ENCODE measurements at regions of chr17 and their contacts with region 1.

Region 1: GRCh38 chr17:66165513-66166123 is 26.3 kb downstream of the CEP112 start:
- DNase-seq: no peak
- ATAC-seq: no peak
- H3K4me3 ChIP-seq: no peak overlapping the region
- H3K27ac ChIP-seq: no peak overlapping the region
- H3K4me1 ChIP-seq: no peaks in the 10 kb centered on the region
- H3K27me3 ChIP-seq: no peaks in the 10 kb centered on the region

Region 2: GRCh38 chr17:65231662-65232335 is 933.8 kb before region 1 on chr17:
- intact Hi-C with region 1: loop called in 1 of 4 experiments (anchors 5 kb)
- DNase-seq: peak in 1 of 3 donors; percentile 34
- ATAC-seq: peak; percentile 75 to 76
- H3K4me3 ChIP-seq: no peak overlapping the region
- H3K27ac ChIP-seq: no peak overlapping the region
- H3K4me1 ChIP-seq: peaks cover 4% of the 10 kb centered on the region
- H3K27me3 ChIP-seq: no peaks in the 10 kb centered on the region

Region 3: GRCh38 chr17:65287040-65287439 is 878.6 kb before region 1 on chr17:
- intact Hi-C with region 1: loop called in 2 of 4 experiments (anchors 5 to 10 kb)
- DNase-seq: no peak
- ATAC-seq: no peak
- H3K4me3 ChIP-seq: no peak overlapping the region
- H3K27ac ChIP-seq: no peak overlapping the region
- H3K4me1 ChIP-seq: peaks cover 2% of the 10 kb centered on the region
- H3K27me3 ChIP-seq: no peaks in the 10 kb centered on the region

Region 4: DNA sequence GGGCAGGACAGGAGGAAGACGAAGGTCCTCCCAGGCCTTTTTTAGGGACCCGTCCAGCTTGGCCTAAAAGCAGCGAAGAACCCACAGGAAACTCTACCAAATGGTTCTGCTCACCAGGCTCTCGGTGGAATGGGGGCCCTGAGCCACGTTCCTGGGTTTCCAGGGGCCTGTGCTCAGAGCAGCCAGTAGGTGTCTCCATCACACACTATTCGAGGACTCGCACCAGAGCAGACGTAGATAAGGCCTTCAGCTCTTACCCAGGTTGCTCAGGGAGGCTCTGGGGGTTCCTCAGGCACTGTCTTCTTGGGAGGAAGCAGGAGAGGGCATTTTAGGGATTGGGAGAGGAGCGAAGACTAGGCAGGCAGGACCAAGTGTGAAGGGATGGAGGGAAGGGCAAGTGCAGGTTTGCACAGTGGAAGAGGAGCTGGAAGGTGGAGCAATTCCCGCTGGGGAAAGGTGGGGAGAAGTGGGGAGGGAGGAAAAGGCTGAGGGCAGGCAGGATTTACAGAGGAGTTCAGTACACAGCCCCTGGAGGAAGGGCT is 871.4 kb before region 1 on chr17:
- intact Hi-C with region 1: loop called in 2 of 4 experiments (anchors 5 to 10 kb)
- DNase-seq: peak; percentile 65 to 76 (median 68)
- ATAC-seq: peak; percentile 85 to 87
- H3K4me3 ChIP-seq: no peak overlapping the region
- H3K27ac ChIP-seq: no peak overlapping the region
- H3K4me1 ChIP-seq: peaks cover 2% of the 10 kb centered on the region
- H3K27me3 ChIP-seq: no peaks in the 10 kb centered on the region

Measured in right cardiac atrium (tissue), 5 donors.